CD8-positive, alpha-beta T cell (primary cell): ENCODE measurements at regions of chrX and their contacts with region 1.

Region 1: DNA sequence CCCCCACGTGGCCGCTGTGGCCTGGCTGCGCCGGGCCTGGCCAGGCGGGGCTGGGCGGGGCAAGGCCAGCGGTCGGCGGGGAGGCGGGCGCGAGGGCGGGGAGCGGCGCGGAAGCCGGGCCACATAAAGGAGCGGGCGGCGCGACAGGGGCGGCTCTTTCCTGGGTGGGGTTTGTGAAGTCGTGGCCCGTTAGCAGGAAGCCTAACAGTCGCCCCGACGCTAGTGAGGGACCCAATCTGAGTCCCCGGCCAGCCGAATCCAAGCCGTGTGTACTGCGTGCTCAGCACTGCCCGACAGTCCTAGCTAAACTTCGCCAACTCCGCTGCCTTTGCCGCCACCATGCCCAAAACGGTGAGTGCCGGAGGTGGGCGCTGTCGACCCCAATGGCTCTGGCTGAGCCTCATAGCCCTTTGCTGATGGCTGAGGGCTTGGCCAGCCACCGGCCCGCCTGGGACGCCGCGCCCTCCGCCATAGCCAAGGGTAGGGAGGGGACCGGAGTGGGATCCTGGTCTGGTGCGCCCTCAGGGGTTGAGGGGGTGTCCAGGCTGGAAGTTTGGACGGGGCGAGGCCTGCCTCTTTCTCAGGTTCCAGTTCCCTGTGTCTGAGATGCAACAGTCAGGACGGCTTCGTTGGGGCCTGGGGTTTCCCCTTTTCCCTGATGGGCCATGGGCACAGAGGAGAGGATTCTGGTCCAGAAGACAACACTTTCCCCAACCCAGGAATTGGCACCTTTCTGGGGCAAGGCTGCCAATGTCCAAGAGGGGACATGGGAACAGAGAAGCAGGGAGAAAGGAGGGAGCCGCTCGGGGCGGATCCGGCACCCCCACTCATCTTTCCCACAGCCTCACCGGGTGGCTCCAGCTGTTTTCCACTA is at the start of gene MSN:
- DNase-seq: peak; percentile 45 to 83 (median 75)
- ATAC-seq: peak; percentile 75
- H3K4me3 ChIP-seq: peak within 1 kb of the TSS; percentile 91 to 93
- H3K4me3 Mint-ChIP-seq: peak within 1 kb of the TSS; percentile 94
- H3K27ac ChIP-seq: peak within 1 kb of the TSS; percentile 73 to 85
- H3K27ac Mint-ChIP-seq: peak within 1 kb of the TSS; percentile 94
- H3K4me1 ChIP-seq: peaks cover 25% of the 10 kb centered on the region
- H3K4me1 Mint-ChIP-seq: peaks cover 47% of the 10 kb centered on the region
- H3K27me3 ChIP-seq: no peaks in the 10 kb centered on the region
- H3K27me3 Mint-ChIP-seq: no peaks in the 10 kb centered on the region
- CTCF ChIP-seq: no peak
- total RNA-seq, gene MSN: 285 to 286 TPM

Region 2: GRCh38 chrX:65688403-65688871 is 20.7 kb after region 1 on chrX:
- CTCF ChIA-PET with region 1: interaction called, 3 read pairs
- POLR2A ChIA-PET with region 1: interaction called, 3 read pairs
- intact Hi-C with region 1: loop called in 1 of 2 experiments (anchors 2 kb)
- DNase-seq: no peak
- ATAC-seq: no peak
- H3K4me3 ChIP-seq: peak overlapping the region in 1 of 2 experiments; percentile 23
- H3K4me3 Mint-ChIP-seq: peak overlapping the region; percentile 65
- H3K27ac ChIP-seq: peak overlapping the region in 1 of 2 experiments; percentile 69
- H3K27ac Mint-ChIP-seq: peak overlapping the region; percentile 97
- H3K4me1 ChIP-seq: peaks cover 90% of the 10 kb centered on the region
- H3K4me1 Mint-ChIP-seq: peaks cover 84% of the 10 kb centered on the region
- H3K27me3 ChIP-seq: no peaks in the 10 kb centered on the region
- H3K27me3 Mint-ChIP-seq: no peaks in the 10 kb centered on the region
- CTCF ChIP-seq: no peak

Region 3: DNA sequence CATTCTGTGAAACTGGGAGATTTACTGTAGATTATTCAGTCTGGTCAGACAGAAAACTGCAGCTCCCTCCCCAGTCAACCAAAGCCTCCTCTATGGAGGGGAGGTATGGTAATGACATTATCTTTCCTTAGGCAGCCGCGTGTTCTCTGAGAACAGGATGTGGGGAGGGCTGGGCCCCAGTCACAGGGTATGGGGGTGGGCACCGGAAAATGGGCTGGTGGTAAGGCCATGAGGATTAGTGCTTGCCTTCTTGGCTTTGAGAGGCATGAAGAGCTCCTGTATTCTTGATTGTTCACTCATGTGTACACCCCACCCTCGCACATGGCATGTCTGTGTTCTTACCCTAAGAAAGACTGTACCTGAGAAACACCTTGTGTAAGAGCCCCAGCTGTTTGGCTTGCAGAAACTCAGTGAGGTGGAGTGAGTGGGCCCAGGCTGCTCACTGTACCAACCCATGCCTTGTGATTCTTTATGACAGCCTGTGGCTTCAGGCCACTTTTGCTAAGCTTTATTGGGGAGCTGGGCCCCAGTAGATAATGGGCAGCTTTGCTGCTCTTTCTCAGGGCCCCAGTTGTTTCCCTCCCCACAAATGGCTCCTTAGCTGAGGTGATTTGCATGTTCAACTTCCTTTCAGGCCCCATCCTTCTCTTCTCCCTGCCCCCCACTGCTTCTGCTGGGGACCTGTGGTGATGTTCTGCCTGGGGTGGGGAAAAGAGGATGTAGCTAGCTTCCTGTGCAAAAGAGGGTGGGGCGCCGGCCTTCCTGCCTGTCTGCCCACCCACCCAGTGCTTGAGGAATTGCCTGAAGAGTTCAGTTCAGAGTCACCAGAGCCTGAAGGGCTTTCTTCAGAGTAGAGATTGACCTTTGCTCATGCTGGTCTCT is 30.4 kb after region 1 on chrX:
- CTCF ChIA-PET with region 1: interaction called, 6 read pairs
- POLR2A ChIA-PET with region 1: interaction called, 9 read pairs
- intact Hi-C with region 1: loop called (anchors 2 to 5 kb)
- DNase-seq: peak; percentile 26 to 85 (median 71)
- ATAC-seq: peak; percentile 77
- H3K4me3 ChIP-seq: peak overlapping the region; percentile 5 to 23
- H3K4me3 Mint-ChIP-seq: peak overlapping the region; percentile 81
- H3K27ac ChIP-seq: peak overlapping the region; percentile 38 to 90
- H3K27ac Mint-ChIP-seq: peak overlapping the region; percentile 97
- H3K4me1 ChIP-seq: peaks cover 92% of the 10 kb centered on the region
- H3K4me1 Mint-ChIP-seq: peaks cover 87% of the 10 kb centered on the region
- H3K27me3 ChIP-seq: no peaks in the 10 kb centered on the region
- H3K27me3 Mint-ChIP-seq: no peaks in the 10 kb centered on the region
- CTCF ChIP-seq: no peak

Region 4: DNA sequence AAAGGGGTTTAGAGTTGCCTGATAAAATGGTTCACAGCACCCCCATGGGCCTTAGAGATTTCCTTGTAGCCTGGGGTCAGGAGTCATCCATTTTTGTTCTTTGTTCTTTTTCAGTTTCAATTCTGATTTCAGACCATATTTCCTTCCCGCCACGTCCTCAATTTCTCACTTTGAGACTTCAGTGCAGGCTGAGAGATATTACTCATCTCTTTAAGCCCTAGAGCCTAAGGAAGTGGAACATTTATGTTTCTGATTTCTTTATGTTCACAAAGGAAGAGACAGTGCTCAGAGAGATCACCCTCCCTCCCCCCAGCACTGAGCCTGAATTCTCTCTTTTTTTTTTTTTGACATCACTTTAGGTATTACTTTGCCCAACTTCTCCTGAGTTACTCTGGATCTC is 56.0 kb after region 1 on chrX:
- CTCF ChIA-PET with region 1: interaction called, 3 read pairs
- POLR2A ChIA-PET with region 1: interaction called, 5 read pairs
- intact Hi-C with region 1: loop called (anchors 2 to 5 kb)
- DNase-seq: peak in 5 of 9 experiments; percentile 13 to 81 (median 53)
- ATAC-seq: peak; percentile 68
- H3K4me3 ChIP-seq: no peak overlapping the region
- H3K4me3 Mint-ChIP-seq: peak overlapping the region; percentile 45
- H3K27ac ChIP-seq: peak overlapping the region; percentile 58 to 83
- H3K27ac Mint-ChIP-seq: peak overlapping the region; percentile 91
- H3K4me1 ChIP-seq: peaks cover 86% of the 10 kb centered on the region
- H3K4me1 Mint-ChIP-seq: peaks cover 84% of the 10 kb centered on the region
- H3K27me3 ChIP-seq: no peaks in the 10 kb centered on the region
- H3K27me3 Mint-ChIP-seq: no peaks in the 10 kb centered on the region
- CTCF ChIP-seq: no peak

Region 5: DNA sequence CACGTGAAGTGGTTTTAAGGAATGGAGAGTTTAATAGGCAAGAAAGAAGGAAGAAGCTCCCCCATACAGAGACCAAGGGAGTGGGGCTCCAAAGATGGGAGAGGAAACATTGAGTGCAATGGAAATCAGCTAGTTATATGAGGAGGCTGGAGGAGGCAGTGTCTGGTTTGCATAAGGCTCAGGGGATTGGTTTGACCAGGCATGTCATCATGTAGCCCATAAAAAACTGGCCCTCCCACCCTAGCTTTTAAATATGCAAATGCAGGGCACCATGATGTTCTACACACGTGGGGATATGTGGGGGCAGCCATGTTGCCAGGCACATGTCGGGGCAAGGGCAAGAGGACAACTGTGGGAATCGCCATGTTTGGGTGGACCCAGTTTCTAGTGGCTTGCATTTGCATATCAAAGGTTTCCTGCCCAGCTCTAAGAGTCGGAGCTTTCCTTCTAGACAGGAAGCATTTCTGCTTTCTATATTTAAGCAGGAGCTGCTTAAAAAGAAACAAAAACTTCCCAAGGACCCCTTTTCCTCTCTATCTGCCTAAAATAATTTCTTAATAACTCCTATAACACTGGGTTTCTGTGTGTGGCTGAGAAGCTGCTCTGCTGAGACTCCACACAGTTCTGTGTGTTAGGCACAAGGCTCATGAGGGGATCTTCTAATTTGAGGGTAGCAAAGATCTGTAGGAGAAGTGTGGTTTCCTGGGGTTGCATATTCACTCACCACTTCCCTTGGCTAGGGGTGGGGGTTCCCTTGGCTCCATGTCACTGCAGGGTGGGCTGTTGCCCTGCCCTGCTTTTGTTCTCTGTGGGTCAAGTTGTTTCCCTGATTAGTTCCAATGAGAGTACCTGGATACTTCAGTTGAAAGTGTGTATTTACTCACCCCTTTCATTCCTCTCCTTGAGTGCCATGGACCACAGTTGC is 258.6 kb after region 1 on chrX:
- CTCF ChIA-PET with region 1: no interaction called
- POLR2A ChIA-PET with region 1: no interaction called
- intact Hi-C with region 1: loop called in 1 of 2 experiments (anchors 5 kb)
- DNase-seq: peak in 7 of 9 experiments; percentile 11 to 75 (median 45)
- ATAC-seq: peak; percentile 80
- H3K4me3 ChIP-seq: peak overlapping the region; percentile 24 to 35
- H3K4me3 Mint-ChIP-seq: peak overlapping the region; percentile 71
- H3K27ac ChIP-seq: peak overlapping the region; percentile 47 to 70
- H3K27ac Mint-ChIP-seq: peak overlapping the region; percentile 87
- H3K4me1 ChIP-seq: peaks cover 40% of the 10 kb centered on the region
- H3K4me1 Mint-ChIP-seq: peaks cover 53% of the 10 kb centered on the region
- H3K27me3 ChIP-seq: no peaks in the 10 kb centered on the region
- H3K27me3 Mint-ChIP-seq: no peaks in the 10 kb centered on the region
- CTCF ChIP-seq: no peak